ENCODE measurements at regions of chr5 and their contacts with region 1.

Region 1: GRCh38 chr5:73792687-73793320 is 166.8 kb downstream of the ARHGEF28 start:
- DNase-seq: peak; percentile 80
- H3K27ac ChIP-seq: no peak overlapping the region
- CTCF ChIP-seq: peak; percentile 100

Region 2: DNA sequence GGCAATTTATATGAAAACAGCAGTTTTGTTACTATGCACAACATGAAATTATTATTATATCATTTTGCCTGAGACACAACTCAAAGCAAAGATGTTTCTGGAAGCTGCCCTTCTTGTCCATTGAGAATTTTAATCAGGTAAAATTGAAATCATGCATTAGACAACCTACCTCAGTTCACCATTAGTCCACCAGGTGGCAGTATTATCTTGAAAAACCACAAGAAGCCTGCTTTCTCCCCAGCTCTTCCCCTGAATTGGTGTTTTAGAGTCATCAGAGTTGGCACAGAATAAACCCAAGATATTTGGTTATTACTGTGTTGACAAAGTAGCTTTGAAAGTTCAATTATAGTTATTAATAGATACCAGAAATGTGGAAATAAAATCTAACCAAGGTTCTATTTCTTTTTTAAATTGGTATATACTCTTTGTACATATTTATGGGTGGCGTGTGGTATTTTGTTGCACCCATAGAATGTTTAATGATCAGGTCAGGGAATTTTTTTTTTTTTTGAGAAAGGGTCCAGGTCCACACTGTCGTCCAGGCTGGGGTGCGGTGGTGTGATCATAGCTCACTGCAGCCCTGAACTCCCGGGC is 201.6 kb before region 1 on chr5:
- CTCF ChIA-PET with region 1: interaction called, 101 read pairs
- POLR2A ChIA-PET with region 1: interaction called, 4 read pairs
- DNase-seq: peak; percentile 84
- H3K27ac ChIP-seq: no peak overlapping the region
- CTCF ChIP-seq: peak; percentile 85

Region 3: GRCh38 chr5:73596705-73597328 is 196.0 kb before region 1 on chr5:
- CTCF ChIA-PET with region 1: interaction called, 101 read pairs
- POLR2A ChIA-PET with region 1: interaction called, 4 read pairs
- DNase-seq: peak; percentile 44
- H3K27ac ChIP-seq: no peak overlapping the region
- CTCF ChIP-seq: peak; percentile 69

Region 4: GRCh38 chr5:73693481-73694061 is 99.2 kb before region 1 on chr5:
- CTCF ChIA-PET with region 1: interaction called, 10 read pairs
- POLR2A ChIA-PET with region 1: no interaction called
- DNase-seq: no peak
- H3K27ac ChIP-seq: no peak overlapping the region
- CTCF ChIP-seq: peak; percentile 35; the same call in 1 of the 2 replicates

Region 5: DNA sequence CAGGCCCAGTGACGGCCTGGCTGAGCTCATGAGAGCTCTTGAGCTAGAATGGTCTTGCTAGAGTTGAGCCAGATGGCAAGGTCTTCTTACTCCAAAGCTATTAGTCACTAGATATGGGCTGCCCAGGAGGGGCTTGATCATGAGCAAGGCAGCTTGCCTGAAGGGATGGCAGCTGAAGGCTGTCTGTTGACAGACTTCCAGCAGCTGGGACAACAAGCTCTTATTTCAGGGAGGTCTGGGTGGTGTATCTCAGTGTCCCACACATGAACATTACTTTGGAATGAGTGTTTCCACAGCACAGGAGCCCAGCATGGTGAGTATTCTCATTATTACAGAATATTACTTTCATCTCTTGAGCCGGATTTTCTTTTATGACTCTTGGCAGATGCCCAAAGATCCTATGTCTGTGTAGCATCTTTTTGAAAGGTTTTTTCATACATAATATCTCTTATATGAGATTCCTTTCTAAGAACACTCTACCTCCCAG is 247.3 kb after region 1 on chr5:
- CTCF ChIA-PET with region 1: no interaction called
- POLR2A ChIA-PET with region 1: no interaction called
- DNase-seq: no peak
- H3K27ac ChIP-seq: peak overlapping the region; percentile 75
- CTCF ChIP-seq: no peak

Region 6: DNA sequence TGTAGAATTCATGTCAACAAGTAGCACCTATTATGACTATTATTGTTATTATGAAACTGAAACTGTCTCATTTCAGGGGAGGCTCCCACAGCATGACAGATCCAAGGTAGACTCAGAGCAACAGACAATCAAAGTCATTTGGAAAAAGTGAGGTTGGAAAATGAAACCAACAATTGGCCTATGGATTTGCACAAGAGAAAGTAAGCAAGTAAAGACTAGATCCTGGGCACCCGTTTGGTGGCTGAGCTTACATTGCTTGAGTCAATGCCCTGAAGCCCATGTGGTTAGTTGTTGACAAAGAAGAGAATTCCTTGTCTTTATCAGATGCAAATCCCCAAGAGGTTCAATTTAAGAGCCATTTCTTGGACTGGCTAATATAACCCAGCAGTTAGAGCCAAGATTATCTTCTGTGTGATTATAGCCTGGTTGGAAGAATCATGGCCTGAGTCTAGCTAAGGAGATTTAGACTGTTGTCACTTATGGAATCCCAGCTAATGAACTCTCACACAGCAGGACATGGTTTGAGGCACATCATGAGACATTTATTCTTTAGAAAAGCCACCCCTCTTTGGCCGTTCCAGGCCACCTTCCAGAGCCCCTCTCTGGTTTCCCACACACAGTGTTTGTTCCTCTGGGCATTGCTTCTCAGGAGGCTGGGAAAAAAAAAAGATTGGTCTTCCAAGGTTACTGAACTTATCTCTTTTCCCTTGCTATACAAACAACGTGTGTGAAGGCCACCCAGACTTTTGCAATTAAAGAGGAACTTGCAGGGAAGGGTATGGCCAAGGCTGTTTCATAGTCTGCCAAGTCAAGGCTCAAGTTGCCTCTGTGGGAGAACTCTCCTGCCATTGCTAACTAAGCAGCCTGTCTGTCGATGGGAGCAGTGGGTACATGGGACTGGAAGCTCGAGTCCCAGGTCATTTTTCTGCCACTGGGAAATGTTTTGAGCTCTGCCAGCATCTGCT is 448.3 kb after region 1 on chr5:
- CTCF ChIA-PET with region 1: no interaction called
- POLR2A ChIA-PET with region 1: no interaction called
- DNase-seq: peak; percentile 88
- H3K27ac ChIP-seq: peak overlapping the region; percentile 81
- CTCF ChIP-seq: no peak